A673 (cell line): ENCODE measurements at regions of chr18 and their contacts with region 1.

Region 1: GRCh38 chr18:21264651-21265050 is 22.6 kb downstream of the GREB1L start:
- DNase-seq: no peak
- H3K4me3 ChIP-seq: no peak overlapping the region
- H3K27ac ChIP-seq: no peak overlapping the region
- H3K4me1 ChIP-seq: no peaks in the 10 kb centered on the region
- H3K27me3 ChIP-seq: peaks cover 32% of the 10 kb centered on the region
- CTCF ChIP-seq: no peak

Region 2: DNA sequence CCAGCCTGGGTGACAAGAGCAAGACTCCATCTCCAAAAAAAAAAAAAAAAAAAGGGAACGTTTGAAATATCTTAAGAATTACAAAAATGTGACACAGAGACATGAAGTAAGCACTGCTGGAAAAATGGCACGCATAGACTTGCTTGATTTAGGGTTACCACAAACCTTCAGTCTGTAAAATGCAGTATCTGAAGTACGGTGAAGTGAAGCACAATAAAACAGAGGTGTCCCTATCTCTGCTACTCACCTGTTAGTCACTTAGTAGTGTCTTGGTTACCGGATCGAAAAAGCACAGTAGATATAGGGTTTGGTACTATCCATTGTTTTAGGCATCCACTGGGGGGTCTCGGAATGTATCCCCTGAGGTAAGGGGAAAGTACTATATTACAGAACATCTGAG is 34.2 kb before region 1 on chr18:
- CTCF ChIA-PET with region 1: no interaction called
- POLR2A ChIA-PET with region 1: no interaction called
- intact Hi-C with region 1: loop called (anchors 5 kb)
- DNase-seq: no peak
- H3K4me3 ChIP-seq: no peak overlapping the region
- H3K27ac ChIP-seq: no peak overlapping the region
- H3K4me1 ChIP-seq: no peaks in the 10 kb centered on the region
- H3K27me3 ChIP-seq: no peaks in the 10 kb centered on the region
- CTCF ChIP-seq: no peak

Region 3: DNA sequence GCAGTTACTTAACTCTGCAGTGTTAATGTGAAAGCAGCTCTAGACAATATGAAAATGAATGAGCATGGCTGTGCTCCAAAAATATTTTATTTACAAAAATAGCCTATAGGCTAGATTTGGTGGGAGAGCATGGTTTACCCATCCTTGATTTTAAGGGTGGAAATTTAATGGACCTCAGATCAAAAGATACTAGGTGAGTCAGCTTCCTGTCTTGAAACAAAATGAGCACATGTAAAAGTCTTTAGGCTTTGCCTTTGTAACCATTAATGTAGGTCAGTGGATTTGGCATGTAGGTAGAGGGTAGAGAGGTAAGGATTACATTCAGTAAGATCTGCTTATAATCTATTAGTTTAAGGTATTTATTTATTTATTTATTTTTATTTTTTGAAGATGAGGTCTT is 50.1 kb after region 1 on chr18:
- CTCF ChIA-PET with region 1: no interaction called
- POLR2A ChIA-PET with region 1: no interaction called
- intact Hi-C with region 1: loop called (anchors 5 kb)
- DNase-seq: no peak
- H3K4me3 ChIP-seq: no peak overlapping the region
- H3K27ac ChIP-seq: no peak overlapping the region
- H3K4me1 ChIP-seq: no peaks in the 10 kb centered on the region
- H3K27me3 ChIP-seq: no peaks in the 10 kb centered on the region
- CTCF ChIP-seq: no peak